Activated CD8-positive, alpha-beta T cell treated with anti-CD3 and anti-CD28 coated beads for 36 hours (primary cell): ENCODE measurements at regions of chr17 and their contacts with region 1.

Region 1: DNA sequence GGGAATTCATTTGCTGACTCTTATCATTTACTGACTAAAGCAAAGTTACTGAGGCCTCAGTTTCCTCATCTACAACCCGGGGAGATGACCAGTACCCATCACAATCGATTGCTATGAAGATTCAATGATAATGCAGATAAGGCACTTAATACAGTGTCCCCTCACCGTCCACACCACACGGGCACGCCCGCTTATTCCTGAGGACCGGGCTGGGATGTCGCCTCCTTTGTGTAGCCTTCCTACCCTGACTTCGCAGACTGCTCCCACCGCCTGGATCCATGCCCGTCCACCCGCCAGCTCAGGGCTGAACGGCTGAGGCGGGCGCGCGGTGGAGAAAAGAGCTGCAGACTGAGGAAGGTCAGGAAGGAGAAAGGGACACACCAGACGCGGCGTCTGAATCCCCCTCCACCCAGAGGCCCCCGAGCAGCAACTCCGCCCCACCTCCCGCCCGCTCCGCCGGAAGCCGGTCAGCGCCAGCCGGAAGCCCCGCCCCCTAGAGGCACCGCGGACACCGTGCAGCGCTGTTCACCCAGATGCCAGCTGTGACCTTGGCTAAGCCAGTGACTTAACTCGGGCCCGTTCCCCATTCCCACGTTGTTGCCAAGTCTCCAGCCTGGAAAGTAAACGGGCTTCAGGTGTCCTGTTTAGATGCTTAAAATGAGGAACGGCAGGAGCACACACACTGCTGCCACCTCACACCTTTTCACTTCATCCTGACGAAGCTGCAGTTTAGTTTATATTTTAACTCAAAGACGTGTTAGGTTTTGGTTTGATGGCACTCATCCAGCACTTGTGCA is at the start of gene KRABD2:
- DNase-seq: peak; percentile 93
- ATAC-seq: peak; percentile 99
- H3K4me3 Mint-ChIP-seq: peak within 1 kb of the TSS; percentile 81
- H3K27ac Mint-ChIP-seq: peak within 1 kb of the TSS; percentile 77
- H3K4me1 Mint-ChIP-seq: peaks cover 49% of the 10 kb centered on the region
- H3K27me3 Mint-ChIP-seq: no peaks in the 10 kb centered on the region
- CTCF ChIP-seq: peak; percentile 42

Region 2: GRCh38 chr17:8326511-8327302 is 49.8 kb before region 1 on chr17:
- CTCF ChIA-PET with region 1: no interaction called
- POLR2A ChIA-PET with region 1: interaction called, 10 read pairs
- intact Hi-C with region 1: no loop called
- DNase-seq: peak; percentile 48
- ATAC-seq: peak; percentile 75
- H3K4me3 Mint-ChIP-seq: peak overlapping the region; percentile 64
- H3K27ac Mint-ChIP-seq: no peak overlapping the region
- H3K4me1 Mint-ChIP-seq: peaks cover 12% of the 10 kb centered on the region
- H3K27me3 Mint-ChIP-seq: peaks cover 35% of the 10 kb centered on the region
- CTCF ChIP-seq: no peak

Region 3: GRCh38 chr17:8359769-8360168 is 16.7 kb before region 1 on chr17:
- CTCF ChIA-PET with region 1: interaction called, 5 read pairs
- POLR2A ChIA-PET with region 1: interaction called, 16 read pairs
- intact Hi-C with region 1: no loop called
- DNase-seq: no peak
- ATAC-seq: no peak
- H3K4me3 Mint-ChIP-seq: no peak overlapping the region
- H3K27ac Mint-ChIP-seq: no peak overlapping the region
- H3K4me1 Mint-ChIP-seq: peaks cover 5% of the 10 kb centered on the region
- H3K27me3 Mint-ChIP-seq: no peaks in the 10 kb centered on the region
- CTCF ChIP-seq: no peak

Region 4: GRCh38 chr17:8393420-8394241 is 17.2 kb after region 1 on chr17:
- CTCF ChIA-PET with region 1: interaction called, 10 read pairs
- POLR2A ChIA-PET with region 1: interaction called, 3 read pairs
- intact Hi-C with region 1: no loop called
- DNase-seq: peak; percentile 72
- ATAC-seq: peak; percentile 98
- H3K4me3 Mint-ChIP-seq: no peak overlapping the region
- H3K27ac Mint-ChIP-seq: peak overlapping the region; percentile 91
- H3K4me1 Mint-ChIP-seq: peaks cover 9% of the 10 kb centered on the region
- H3K27me3 Mint-ChIP-seq: peaks cover 2% of the 10 kb centered on the region
- CTCF ChIP-seq: no peak